ENCODE measurements at regions of chr19 and their contacts with region 1.

Region 1: DNA sequence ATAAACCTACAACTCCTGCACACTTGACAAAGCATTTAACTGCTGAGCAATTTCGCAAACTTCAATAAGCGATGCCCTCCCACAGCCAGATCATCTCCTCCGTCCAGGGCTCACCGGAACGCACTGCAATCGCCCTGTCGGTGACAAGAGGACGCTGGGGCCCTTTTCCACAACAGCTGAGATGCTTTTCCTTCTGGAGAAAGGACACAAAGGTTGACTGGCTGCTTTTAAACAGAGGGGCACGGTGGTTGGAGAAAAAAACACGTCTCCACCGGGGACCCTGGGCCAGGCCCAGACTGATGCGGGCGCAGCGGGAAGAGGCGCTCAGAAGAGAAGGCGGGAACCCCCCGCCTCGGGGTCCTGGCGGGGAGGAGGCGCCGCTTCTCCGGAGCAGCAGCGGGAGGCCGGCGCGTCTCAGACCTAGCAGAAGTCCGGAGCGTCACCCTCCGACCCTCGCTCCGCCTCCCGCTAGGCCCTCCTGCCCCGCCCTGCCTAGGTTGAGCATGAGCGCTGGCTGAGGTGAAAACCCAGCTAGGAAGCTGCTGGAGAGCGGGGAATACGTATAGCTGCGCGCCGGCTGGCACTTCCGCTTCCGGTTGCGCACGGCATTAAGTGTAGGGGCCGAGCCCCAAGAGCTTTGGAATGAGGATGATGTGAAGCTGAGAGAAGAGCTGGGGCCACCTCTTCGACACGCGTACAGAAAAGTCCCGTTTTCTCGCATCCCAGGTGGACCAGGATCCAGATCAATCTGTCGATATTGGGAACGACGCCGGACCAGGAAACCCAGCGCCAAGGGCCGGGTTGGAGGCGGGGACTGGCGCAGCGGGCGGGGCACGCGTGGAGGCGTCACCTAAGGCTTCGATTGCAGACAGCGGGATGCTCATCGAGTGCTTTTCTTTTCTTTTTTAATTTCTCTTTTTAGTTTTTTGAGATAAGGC is at the start of gene ZNF846:
- DNase-seq: peak; percentile 83 to 96 (median 92)
- ATAC-seq: peak; percentile 95 to 98
- H3K4me3 Mint-ChIP-seq: peak within 1 kb of the TSS; percentile 89 to 99 (median 96)
- H3K27ac Mint-ChIP-seq: peak within 1 kb of the TSS; percentile 91 to 100 (median 99)
- H3K4me1 Mint-ChIP-seq: peaks cover 2 to 22% (median 10%) of the 10 kb centered on the region in 4 donors
- H3K27me3 Mint-ChIP-seq: no peaks in the 10 kb centered on the region
- polyA plus RNA-seq, gene ZNF846: 6.0 to 10.6 (median 9.5) TPM

Region 2: DNA sequence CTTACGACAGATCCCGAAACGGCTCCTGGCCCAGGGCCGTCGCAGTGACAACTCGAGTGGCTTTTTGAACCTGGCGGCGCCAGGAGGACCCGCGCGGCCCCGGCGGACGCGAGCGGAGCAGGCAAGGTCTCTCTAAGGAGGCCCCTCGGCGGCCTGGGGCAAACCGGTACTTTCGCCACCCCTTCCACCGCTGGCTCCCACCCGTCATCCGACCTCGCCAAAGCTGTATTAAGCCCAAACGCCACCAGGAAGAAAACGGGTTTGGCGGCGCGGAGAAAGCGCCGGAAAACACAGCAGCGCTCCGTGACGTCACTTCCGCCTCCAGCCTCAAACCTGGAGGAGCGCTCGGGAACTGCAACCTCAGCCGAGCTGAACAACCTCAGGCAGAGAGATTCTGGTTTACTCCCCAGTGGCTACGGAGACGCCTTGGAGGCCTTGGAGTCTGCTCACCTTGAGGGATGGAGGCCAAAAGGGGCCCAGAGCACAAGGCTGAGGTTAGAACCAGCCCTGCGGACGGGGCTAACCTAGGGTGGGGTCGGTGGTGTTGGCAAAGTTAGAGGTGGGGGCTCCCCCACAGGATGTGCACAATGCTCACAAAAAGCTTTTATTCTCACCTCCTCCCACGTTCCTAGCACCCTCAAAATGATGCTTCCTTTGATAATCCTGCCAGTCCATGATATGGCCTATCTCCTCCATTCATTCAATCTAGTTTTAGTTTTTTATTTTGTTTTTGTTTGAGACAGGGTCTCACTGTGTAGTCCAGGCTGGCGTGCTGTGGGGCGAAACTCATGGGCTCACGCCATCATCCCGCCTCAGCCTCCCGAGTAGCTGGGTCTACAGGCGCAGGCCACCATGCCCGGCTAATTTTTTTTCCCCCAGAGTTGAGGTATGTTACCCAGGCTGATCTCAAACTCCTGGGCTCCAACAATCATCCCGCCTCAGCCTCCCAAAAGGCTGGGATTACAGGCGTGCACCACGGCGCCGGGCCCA is 332.9 kb before region 1 on chr19 and contains the start of gene ZNF266:
- POLR2A ChIA-PET with region 1: interaction called, 12 read pairs
- DNase-seq: peak; percentile 86 to 96 (median 92)
- ATAC-seq: peak; percentile 89
- H3K4me3 Mint-ChIP-seq: peak within 1 kb of the TSS; percentile 91 to 98 (median 96)
- H3K27ac Mint-ChIP-seq: peak within 1 kb of the TSS; percentile 97 to 100 (median 98)
- H3K4me1 Mint-ChIP-seq: peaks cover 19 to 51% (median 51%) of the 10 kb centered on the region in 4 donors
- H3K27me3 Mint-ChIP-seq: no peaks in the 10 kb centered on the region
- polyA plus RNA-seq, gene ZNF266: 15.5 to 18.8 (median 17.7) TPM

Region 3: DNA sequence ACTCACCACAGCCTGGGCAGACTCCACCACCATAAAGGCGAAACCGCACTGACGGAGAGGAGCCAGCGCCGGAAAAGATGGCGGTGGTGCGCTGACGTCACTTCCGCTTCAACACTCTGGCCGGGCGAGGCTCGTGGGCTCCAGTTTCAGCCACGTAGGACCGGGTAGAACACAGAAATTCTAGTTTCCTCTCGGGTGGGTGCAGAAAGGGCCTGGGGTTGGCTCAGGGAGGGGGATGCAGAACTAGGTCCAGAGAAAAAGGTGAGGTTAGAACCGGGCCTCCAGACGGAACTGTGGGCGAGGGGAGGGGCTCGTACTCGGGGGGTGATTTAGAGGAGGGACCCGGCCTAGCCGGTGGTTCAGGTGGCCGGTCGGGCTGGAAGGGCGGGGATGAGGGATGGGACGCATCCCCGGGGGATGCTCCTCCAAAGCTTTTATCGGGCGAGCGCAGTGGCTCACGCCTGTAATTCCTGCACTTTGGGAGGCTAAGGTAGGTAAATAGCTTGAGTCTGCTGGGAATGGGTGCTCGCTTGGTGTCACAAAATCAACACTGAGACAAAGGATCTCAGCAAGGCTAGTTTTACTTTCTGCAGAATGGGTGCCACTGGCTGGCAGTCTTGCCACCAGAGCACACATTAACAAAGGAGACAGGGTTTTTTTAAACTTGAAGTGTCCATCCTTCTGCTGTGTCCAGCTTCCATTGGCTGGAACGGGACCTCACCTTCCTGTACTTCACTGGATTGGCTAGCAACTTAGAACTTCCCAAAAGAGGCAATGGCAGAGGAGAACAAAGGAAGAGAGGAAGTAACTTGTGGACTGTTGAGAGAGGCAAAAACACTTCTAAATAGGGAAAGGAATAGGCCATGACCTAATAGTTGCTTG is 147.0 kb before region 1 on chr19 and contains the start of gene ZNF561:
- POLR2A ChIA-PET with region 1: interaction called, 14 read pairs
- DNase-seq: peak; percentile 77 to 95 (median 91)
- ATAC-seq: peak; percentile 93 to 95
- H3K4me3 Mint-ChIP-seq: peak within 1 kb of the TSS; percentile 93 to 100 (median 98)
- H3K27ac Mint-ChIP-seq: peak within 1 kb of the TSS; percentile 99 to 100 (median 100)
- H3K4me1 Mint-ChIP-seq: peaks cover 12 to 38% (median 34%) of the 10 kb centered on the region in 4 donors
- H3K27me3 Mint-ChIP-seq: peaks cover 0 to 4% (median 0%) of the 10 kb centered on the region in 5 donors
- polyA plus RNA-seq, gene ZNF561: 12.2 to 16.3 (median 14.7) TPM

Region 4: GRCh38 chr19:9785367-9786331 is 17.2 kb after region 1 on chr19:
- POLR2A ChIA-PET with region 1: interaction called, 12 read pairs
- DNase-seq: peak; percentile 91 to 99 (median 95)
- ATAC-seq: peak; percentile 80 to 81
- H3K4me3 Mint-ChIP-seq: peak overlapping the region; percentile 88 to 97 (median 92)
- H3K27ac Mint-ChIP-seq: peak overlapping the region; percentile 91 to 99 (median 96)
- H3K4me1 Mint-ChIP-seq: peaks cover 10 to 48% (median 34%) of the 10 kb centered on the region in 4 donors
- H3K27me3 Mint-ChIP-seq: no peaks in the 10 kb centered on the region

Region 5: GRCh38 chr19:9796113-9796773 is 27.8 kb after region 1 on chr19:
- POLR2A ChIA-PET with region 1: interaction called, 14 read pairs
- DNase-seq: peak; percentile 61 to 94 (median 86)
- ATAC-seq: peak; percentile 40 to 54
- H3K4me3 Mint-ChIP-seq: peak overlapping the region in 2 of 10 donors; percentile 28 to 65
- H3K27ac Mint-ChIP-seq: peak overlapping the region; percentile 81 to 98 (median 91)
- H3K4me1 Mint-ChIP-seq: peaks cover 9 to 34% (median 29%) of the 10 kb centered on the region in 4 donors
- H3K27me3 Mint-ChIP-seq: no peaks in the 10 kb centered on the region

Region 6: DNA sequence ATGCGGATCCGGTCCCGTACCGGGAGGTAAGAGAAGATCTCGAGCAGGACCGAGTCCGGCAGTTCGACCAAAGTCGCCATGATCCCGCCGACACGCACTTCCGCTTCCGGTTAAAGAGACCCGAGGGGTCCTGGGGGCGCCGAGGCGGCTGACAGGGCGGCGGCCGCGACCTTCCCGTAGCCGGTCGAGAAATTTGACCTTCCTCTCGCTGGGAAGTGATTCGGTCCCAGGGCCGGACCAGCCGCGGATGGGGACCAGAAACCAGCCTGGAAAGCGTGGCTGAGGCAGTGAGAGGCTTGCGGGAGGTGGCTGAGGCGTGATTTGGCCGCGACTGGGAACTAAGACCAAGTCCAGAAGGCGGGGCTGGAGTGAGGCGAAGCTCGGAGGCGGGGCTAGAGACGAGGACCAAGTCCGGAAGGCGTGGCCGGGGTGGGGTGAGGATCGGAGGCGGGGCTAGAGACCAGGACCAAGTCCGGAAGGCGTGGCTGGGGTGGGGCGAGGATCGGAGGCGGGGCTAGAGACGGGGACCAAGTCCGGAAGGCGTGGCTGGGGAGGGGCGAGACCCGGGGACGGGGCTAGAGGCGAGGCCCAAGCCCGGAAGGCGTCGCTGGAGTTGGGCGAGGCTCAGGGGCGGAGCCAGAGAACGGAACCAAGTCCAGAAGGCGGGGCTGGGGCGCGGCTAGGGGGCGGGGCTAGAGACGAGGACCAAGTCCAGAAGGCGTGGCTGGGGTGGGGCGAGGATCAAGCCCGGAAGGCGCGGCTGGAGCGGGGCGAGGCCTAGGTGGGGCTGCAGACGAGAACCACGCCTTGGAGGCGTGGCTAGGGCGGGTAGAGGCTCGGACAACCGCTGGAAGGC is 50.5 kb after region 1 on chr19 and contains the start of gene FBXL12:
- POLR2A ChIA-PET with region 1: interaction called, 14 read pairs
- DNase-seq: peak; percentile 99 to 100 (median 100)
- ATAC-seq: peak; percentile 87 to 90
- H3K4me3 Mint-ChIP-seq: peak within 1 kb of the TSS; percentile 89 to 94 (median 92)
- H3K27ac Mint-ChIP-seq: peak within 1 kb of the TSS; percentile 83 to 98 (median 93)
- H3K4me1 Mint-ChIP-seq: peaks cover 13 to 42% (median 35%) of the 10 kb centered on the region in 4 donors
- H3K27me3 Mint-ChIP-seq: no peaks in the 10 kb centered on the region
- polyA plus RNA-seq, gene FBXL12: 8.3 to 15.6 (median 8.5) TPM

Measured in naive thymus-derived CD8-positive, alpha-beta T cell (primary cell).